ENCODE measurements at regions of chr6 and their contacts with region 1.

Region 1: GRCh38 chr6:1596088-1596852 is 13.4 kb upstream of the FOXC1 start:
- DNase-seq: peak; percentile 58
- H3K4me3 ChIP-seq: no peak overlapping the region
- H3K27ac ChIP-seq: no peak overlapping the region
- H3K4me1 ChIP-seq: no peaks in the 10 kb centered on the region
- H3K27me3 ChIP-seq: peaks cover 1 to 2% of the 10 kb centered on the region in 2 experiments
- CTCF ChIP-seq: peak; percentile 81 to 93
- POLR2A ChIP-seq: no peak

Region 2: DNA sequence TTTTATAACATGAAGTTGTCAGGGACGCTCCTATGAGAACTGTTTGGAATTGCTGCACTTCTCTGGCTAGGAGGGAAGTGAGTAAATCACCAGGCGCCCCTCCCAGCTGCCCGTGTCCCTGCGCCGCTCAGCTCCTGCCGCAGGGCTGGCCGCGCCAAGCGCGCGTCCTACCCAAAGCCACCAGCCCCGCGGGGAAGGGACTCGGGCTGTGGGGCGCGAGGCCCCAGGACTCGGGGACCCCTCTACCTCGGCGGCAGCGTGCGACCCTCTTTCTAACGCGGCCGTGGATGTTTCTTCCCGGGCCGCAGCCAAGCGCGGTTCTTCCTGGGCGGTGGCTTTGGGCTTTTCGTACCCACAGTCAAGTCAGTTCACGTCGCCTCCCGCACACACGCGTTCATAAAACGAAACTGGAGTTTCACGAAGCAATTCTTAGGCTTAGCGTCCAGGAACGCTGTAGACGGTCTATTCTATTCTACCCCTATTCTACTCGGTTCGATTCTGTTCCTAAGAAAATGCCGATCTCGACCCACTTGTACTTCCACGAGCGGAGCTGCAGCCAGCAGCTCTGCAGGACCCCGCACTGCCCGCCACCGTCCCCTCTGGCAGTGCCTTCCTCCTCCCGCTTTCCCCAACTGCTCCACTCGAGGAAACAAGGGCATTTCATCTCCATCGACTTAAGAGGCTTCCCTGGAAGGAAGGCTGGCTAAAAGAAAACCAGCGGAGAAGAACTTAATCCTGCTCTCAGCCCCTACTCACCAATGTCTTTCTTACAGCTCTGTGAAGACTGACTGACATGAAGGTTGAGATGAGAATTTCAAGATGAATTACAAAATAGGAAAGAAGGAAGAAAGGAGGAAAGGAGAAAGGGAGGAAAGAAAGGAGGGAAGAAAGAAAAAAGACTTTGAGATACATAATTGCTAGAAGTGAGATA is 28.8 kb after region 1 on chr6:
- CTCF ChIA-PET with region 1: no interaction called
- POLR2A ChIA-PET with region 1: no interaction called
- dilution Hi-C with region 1: no loop called
- intact Hi-C with region 1: no loop called
- DNase-seq: peak; percentile 73
- H3K4me3 ChIP-seq: peak overlapping the region; percentile 59 to 86 (median 69)
- H3K27ac ChIP-seq: peak overlapping the region; percentile 3
- H3K4me1 ChIP-seq: peaks cover 21% of the 10 kb centered on the region
- H3K27me3 ChIP-seq: peaks cover 5 to 15% of the 10 kb centered on the region in 2 experiments
- CTCF ChIP-seq: no peak
- POLR2A ChIP-seq: no peak

Region 3: DNA sequence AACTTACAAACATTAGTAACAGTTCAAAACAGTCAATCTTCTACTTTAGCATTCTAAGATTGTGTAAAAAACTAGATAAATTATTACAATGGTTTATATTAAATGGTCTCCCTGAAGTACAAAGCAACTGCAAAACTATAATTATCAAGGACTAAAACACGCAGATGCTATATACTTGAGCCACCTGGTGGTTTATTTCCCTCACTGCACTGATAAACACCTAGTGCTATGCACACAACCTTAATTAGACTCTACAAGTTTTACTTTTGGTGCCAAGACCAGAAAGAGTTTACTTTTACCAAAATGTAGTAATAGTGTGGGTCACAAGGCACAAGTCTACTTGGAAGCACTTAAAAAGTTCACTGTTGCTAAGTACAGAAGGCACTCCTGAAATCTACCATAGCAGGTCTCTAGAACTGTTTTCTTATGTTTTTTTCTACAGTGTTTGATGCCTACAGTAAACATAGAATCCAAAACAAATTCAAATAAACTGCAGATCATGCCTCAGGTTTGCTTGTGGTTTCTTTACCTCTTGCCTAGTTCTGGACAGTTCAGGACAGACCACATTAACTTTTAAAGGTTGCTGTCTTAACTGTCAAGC is 599.9 kb after region 1 on chr6:
- CTCF ChIA-PET with region 1: interaction called, 4 read pairs
- POLR2A ChIA-PET with region 1: no interaction called
- dilution Hi-C with region 1: no loop called
- intact Hi-C with region 1: loop called (anchors 1 kb)
- DNase-seq: peak; percentile 88
- H3K4me3 ChIP-seq: no peak overlapping the region
- H3K27ac ChIP-seq: no peak overlapping the region
- H3K4me1 ChIP-seq: peaks cover 11% of the 10 kb centered on the region
- H3K27me3 ChIP-seq: no peaks in the 10 kb centered on the region
- CTCF ChIP-seq: peak; percentile 50 to 53
- POLR2A ChIP-seq: no peak

Region 4: GRCh38 chr6:2579241-2579761 is 983.0 kb after region 1 on chr6:
- CTCF ChIA-PET with region 1: no interaction called
- POLR2A ChIA-PET with region 1: no interaction called
- dilution Hi-C with region 1: no loop called
- intact Hi-C with region 1: loop called (anchors 5 kb)
- DNase-seq: peak; percentile 21
- H3K4me3 ChIP-seq: no peak overlapping the region
- H3K27ac ChIP-seq: peak overlapping the region; percentile 69
- H3K4me1 ChIP-seq: peaks cover 44% of the 10 kb centered on the region
- H3K27me3 ChIP-seq: no peaks in the 10 kb centered on the region
- CTCF ChIP-seq: no peak
- POLR2A ChIP-seq: no peak

Region 5: GRCh38 chr6:2738373-2738979 is 1142.2 kb after region 1 on chr6:
- CTCF ChIA-PET with region 1: interaction called, 17 read pairs
- POLR2A ChIA-PET with region 1: no interaction called
- dilution Hi-C with region 1: no loop called
- intact Hi-C with region 1: no loop called
- DNase-seq: peak; percentile 72
- H3K4me3 ChIP-seq: no peak overlapping the region
- H3K27ac ChIP-seq: no peak overlapping the region
- H3K4me1 ChIP-seq: no peaks in the 10 kb centered on the region
- H3K27me3 ChIP-seq: no peaks in the 10 kb centered on the region
- CTCF ChIP-seq: peak; percentile 54 to 64
- POLR2A ChIP-seq: no peak

Region 6: GRCh38 chr6:2749969-2750600 is 1153.8 kb after region 1 on chr6:
- CTCF ChIA-PET with region 1: interaction called, 109 read pairs
- POLR2A ChIA-PET with region 1: no interaction called
- dilution Hi-C with region 1: no loop called
- intact Hi-C with region 1: loop called (anchors 1 kb)
- DNase-seq: peak; percentile 65
- H3K4me3 ChIP-seq: no peak overlapping the region
- H3K27ac ChIP-seq: no peak overlapping the region
- H3K4me1 ChIP-seq: no peaks in the 10 kb centered on the region
- H3K27me3 ChIP-seq: no peaks in the 10 kb centered on the region
- CTCF ChIP-seq: peak; percentile 75 to 85
- POLR2A ChIP-seq: no peak

Measured in endothelial cell of umbilical vein (primary cell).